Psoas muscle (tissue), 8 donors: ENCODE measurements at regions of chr19 and their contacts with region 1.

Region 1: DNA sequence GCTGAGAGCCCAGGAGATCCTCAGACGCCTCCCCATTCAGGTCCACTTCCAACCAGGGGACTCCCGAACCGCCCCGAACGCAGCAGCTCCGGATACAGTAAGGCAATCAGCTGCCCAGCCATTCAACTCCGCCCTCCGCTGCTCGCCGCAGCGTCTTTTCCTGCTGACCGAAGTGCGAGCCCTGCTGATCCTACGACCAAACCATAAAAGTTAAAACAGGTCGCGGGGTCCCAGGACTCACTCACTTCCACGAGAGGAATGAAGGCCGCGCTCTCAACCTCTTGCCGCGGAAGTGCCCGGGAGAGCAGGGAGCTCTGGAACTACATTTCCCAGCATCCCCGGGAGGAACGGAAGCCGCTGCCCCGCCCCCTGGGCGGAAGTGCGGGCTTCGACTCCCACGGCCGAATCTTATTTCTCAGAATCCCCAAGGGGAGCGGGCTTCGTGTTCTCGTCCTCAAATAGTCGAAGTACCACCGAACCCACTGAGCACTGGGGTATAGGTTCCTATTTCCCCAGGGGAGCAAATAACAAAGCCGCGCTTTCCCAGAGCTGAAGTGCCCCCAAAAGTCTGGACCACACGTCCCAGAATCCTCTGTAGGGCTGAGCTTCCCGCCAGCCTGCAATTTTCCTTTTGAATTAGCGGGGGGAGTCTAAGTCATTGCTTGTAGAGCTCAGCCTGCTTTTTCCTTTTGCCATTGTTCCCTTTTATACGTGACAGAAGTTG is at the start of gene ZNF45:
- DNase-seq: peak; percentile 88 to 93
- ATAC-seq: peak; percentile 98 to 100 (median 100)
- H3K4me3 ChIP-seq: peak within 1 kb of the TSS; percentile 87
- H3K27ac ChIP-seq: peak within 1 kb of the TSS; percentile 85
- H3K4me1 ChIP-seq: peaks cover 14% of the 10 kb centered on the region
- H3K27me3 ChIP-seq: no peaks in the 10 kb centered on the region
- CTCF ChIP-seq: no peak
- total RNA-seq, gene ZNF45: 3.5 to 9.5 (median 4.9) TPM

Region 2: GRCh38 chr19:43950834-43951645 is 15.9 kb after region 1 on chr19 and contains the start of gene ZNF221:
- intact Hi-C with region 1: loop called in 1 of 2 experiments (anchors 2 kb)
- DNase-seq: peak; percentile 89 to 94
- ATAC-seq: peak; percentile 100
- H3K4me3 ChIP-seq: peak within 1 kb of the TSS; percentile 79
- H3K27ac ChIP-seq: peak within 1 kb of the TSS; percentile 53
- H3K4me1 ChIP-seq: no peaks in the 10 kb centered on the region
- H3K27me3 ChIP-seq: no peaks in the 10 kb centered on the region
- CTCF ChIP-seq: peak; percentile 41
- total RNA-seq, gene ZNF221: 0.54 to 2.5 (median 1.2) TPM

Region 3: GRCh38 chr19:44005973-44006372 is 70.8 kb after region 1 on chr19:
- intact Hi-C with region 1: no loop called
- DNase-seq: no peak
- ATAC-seq: no peak
- H3K4me3 ChIP-seq: no peak overlapping the region
- H3K27ac ChIP-seq: no peak overlapping the region
- H3K4me1 ChIP-seq: peaks cover 12% of the 10 kb centered on the region
- H3K27me3 ChIP-seq: no peaks in the 10 kb centered on the region
- CTCF ChIP-seq: no peak